Aorta (tissue), 5 donors: ENCODE measurements at regions of chr20 and their contacts with region 1.

Region 1: DNA sequence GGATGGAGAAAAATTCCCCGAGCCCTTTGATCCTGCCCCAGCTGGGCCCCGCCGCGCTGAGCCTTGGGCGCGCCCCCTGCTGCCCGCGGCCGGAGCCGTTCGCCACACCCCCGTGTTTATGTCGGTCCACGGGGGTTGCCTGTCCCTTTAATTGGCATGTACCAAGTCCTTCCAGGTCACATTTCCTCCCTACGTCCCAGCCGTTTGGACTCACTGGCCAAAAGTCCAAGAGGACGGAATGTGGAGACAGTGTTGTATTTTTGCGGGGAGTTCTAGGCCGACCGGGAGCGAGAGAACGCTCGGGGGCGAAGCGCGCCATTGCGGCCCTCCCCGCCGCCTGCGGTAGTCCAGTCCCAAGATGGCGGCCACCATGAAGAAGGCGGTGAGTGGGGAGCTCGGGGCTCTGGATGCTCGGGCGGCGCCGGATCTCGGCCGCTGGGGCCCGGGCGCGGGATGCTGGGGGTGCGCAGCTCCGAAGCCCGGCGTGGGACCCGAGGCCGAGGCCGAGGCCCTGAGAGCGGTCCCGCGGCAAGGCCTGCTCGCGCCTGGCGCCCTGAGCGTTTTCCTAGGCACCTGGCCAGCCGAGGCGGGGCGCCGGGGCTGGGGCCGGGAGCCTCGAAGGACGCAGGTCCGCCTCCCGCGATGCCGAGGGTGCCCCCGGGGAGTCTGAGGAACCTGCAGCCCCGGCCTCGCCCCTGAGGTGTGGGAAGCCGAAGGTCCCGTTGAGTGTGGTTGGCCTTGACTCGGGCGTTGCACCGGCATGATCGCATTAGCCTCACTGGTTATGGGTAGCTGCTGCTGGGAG is at the start of gene PFDN4:
- DNase-seq: peak; percentile 87 to 93
- ATAC-seq: peak; percentile 95
- H3K4me3 ChIP-seq: peak within 1 kb of the TSS; percentile 62 to 92
- H3K27ac ChIP-seq: peak within 1 kb of the TSS; percentile 85 to 86
- H3K4me1 ChIP-seq: peaks cover 1 to 10% of the 10 kb centered on the region in 2 donors
- H3K27me3 ChIP-seq: no peaks in the 10 kb centered on the region
- total RNA-seq, gene PFDN4: 19.8 to 22.0 TPM

Region 2: DNA sequence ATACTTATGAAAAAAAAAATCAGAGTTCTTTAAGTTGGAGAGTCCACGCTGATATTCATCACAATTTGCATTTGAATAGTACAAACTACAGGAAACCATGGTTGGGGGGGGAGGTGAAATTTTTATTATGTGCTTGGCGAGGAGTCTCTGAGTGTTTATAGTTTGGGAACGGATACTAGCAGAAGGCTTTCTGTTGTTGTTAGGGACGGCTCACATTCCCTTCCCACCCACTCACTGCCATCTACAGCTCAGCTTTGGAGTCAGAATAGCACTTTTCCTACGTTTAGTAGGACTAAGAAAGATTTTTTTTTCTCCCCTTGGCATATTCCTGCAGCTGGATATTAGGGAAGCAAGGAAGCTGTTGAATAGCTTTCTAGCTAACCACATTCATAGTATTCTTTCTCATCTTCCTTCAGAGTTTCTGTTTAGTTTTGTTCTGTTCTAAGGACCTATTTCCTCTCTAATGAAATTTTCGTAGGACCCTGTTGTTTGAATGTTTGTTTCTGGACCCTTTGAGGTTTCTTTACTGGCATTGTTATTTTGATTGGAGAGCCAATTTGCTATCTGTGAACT is 379.2 kb before region 1 on chr20:
- intact Hi-C with region 1: loop called in 1 of 2 experiments (anchors 5 kb)
- DNase-seq: no peak
- ATAC-seq: peak; percentile 84
- H3K4me3 ChIP-seq: peak overlapping the region; percentile 51 to 67
- H3K27ac ChIP-seq: peak overlapping the region; percentile 90 to 95
- H3K4me1 ChIP-seq: peaks cover 0 to 4% of the 10 kb centered on the region in 2 donors
- H3K27me3 ChIP-seq: no peaks in the 10 kb centered on the region

Region 3: DNA sequence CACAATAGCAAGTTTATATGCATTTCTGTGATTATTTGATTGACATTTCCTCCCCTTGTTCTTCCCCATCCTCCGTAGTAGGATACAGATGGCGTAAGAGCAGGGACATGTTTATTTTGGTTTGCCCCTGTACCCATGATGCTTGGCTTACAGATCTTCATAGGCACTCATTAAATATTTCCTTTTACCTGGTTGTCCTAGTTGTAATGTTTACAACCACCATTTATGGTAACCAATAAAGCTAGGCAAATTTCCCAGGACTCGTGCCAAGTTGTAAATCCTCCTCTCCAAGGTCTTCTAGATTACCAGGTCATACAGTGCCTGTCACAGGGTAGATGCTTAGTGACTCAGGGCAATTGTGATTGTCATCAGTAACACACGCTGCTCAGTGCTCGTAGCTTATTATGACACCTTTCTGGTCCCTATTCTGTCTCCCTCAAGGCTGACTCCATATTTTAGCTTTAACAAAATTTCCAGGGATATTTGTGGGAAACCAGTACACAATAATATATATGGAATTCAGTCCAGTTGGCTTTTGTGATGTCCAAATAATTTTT is 58.9 kb before region 1 on chr20:
- intact Hi-C with region 1: no loop called
- DNase-seq: no peak
- ATAC-seq: no peak
- H3K4me3 ChIP-seq: no peak overlapping the region
- H3K27ac ChIP-seq: no peak overlapping the region
- H3K4me1 ChIP-seq: no peaks in the 10 kb centered on the region
- H3K27me3 ChIP-seq: no peaks in the 10 kb centered on the region

Region 4: GRCh38 chr20:54246564-54246963 is 38.6 kb after region 1 on chr20:
- intact Hi-C with region 1: no loop called
- DNase-seq: no peak
- ATAC-seq: no peak
- H3K4me3 ChIP-seq: no peak overlapping the region
- H3K27ac ChIP-seq: no peak overlapping the region
- H3K4me1 ChIP-seq: no peaks in the 10 kb centered on the region
- H3K27me3 ChIP-seq: no peaks in the 10 kb centered on the region